WTC11 (cell line): ENCODE measurements at regions of chr1 and their contacts with region 1.

Region 1: GRCh38 chr1:1788646-1789431 is 10.6 kb upstream of the NADK start:
- DNase-seq: peak; percentile 69
- ATAC-seq: peak; percentile 58
- H3K4me3 Mint-ChIP-seq: no peak overlapping the region
- H3K27ac Mint-ChIP-seq: peak overlapping the region; percentile 39
- H3K4me1 Mint-ChIP-seq: 0 out of 2 replicates have a peak, but pooled peaks cover 2% of the 10 kb centered on the region
- H3K27me3 Mint-ChIP-seq: no peaks in the 10 kb centered on the region
- CTCF ChIP-seq: no peak

Region 2: GRCh38 chr1:1777950-1778662 is 10.7 kb before region 1 on chr1 and contains the start of gene NADK:
- CTCF ChIA-PET with region 1: interaction called, 30 read pairs
- POLR2A ChIA-PET with region 1: interaction called, 3 read pairs
- DNase-seq: peak; percentile 64
- ATAC-seq: peak; percentile 1
- H3K4me3 Mint-ChIP-seq: peak within 1 kb of the TSS; percentile 81
- H3K27ac Mint-ChIP-seq: peak within 1 kb of the TSS; percentile 99
- H3K4me1 Mint-ChIP-seq: peaks cover 49% of the 10 kb centered on the region
- H3K27me3 Mint-ChIP-seq: no peaks in the 10 kb centered on the region
- CTCF ChIP-seq: no peak
- total RNA-seq, gene NADK: 106 to 124 TPM (median 119 TPM) in 3 replicates

Region 3: GRCh38 chr1:1802871-1803270 is 14.0 kb after region 1 on chr1:
- CTCF ChIA-PET with region 1: interaction called, 11 read pairs
- POLR2A ChIA-PET with region 1: no interaction called
- DNase-seq: no peak
- ATAC-seq: no peak
- H3K4me3 Mint-ChIP-seq: no peak overlapping the region
- H3K27ac Mint-ChIP-seq: no peak overlapping the region; the same call in 1 of the 2 replicates
- H3K4me1 Mint-ChIP-seq: no peaks in the 10 kb centered on the region
- H3K27me3 Mint-ChIP-seq: no peaks in the 10 kb centered on the region
- CTCF ChIP-seq: no peak

Region 4: GRCh38 chr1:1919304-1920056 is 130.6 kb after region 1 on chr1:
- CTCF ChIA-PET with region 1: no interaction called
- POLR2A ChIA-PET with region 1: no interaction called
- DNase-seq: peak; percentile 100
- ATAC-seq: peak; percentile 87
- H3K4me3 Mint-ChIP-seq: peak overlapping the region; percentile 30
- H3K27ac Mint-ChIP-seq: no peak overlapping the region
- H3K4me1 Mint-ChIP-seq: peaks cover 7% of the 10 kb centered on the region; the same call in 1 of the 2 replicates
- H3K27me3 Mint-ChIP-seq: no peaks in the 10 kb centered on the region
- CTCF ChIP-seq: no peak